Endothelial cell of umbilical vein (primary cell): ENCODE measurements at regions of chrX and their contacts with region 1.

Region 1: DNA sequence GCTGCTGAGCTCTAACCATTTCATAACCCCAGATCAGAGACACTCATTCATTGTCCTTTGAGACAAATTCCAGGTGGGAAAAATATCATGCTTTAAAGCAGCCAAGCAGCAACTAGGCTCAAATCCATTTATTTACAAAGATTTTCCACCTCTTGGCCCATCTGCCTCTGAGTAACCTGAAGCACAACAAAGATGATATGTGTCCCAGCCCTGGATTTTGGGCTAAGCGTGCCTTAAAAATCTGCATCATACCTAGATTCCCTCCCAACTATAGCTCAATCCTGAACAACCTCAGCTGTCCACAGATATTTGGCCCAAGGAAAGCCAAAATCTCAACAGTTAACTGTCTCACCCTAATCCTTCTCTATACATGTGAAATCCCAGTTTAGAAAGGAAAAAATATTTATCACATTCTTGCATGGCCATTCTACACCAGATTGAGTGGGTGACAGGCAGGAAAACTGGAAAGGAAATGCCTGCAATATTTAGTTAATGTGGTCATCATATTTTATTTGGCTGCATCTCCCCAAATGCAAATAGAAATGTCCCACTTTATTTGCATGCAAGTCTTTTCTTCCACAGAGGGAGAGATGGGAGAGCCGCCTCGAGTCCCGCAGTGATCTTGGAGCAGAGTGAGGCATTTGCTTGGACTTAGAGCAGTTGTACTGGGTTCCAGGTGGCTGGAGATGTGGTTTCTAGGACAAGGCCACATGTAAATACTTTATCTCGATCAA is 146.4 kb upstream of the EOLA2 start:
- DNase-seq: peak; percentile 81
- H3K4me3 ChIP-seq: no peak overlapping the region
- H3K27ac ChIP-seq: peak overlapping the region; percentile 90
- H3K4me1 ChIP-seq: peaks cover 27% of the 10 kb centered on the region
- H3K27me3 ChIP-seq: no peaks in the 10 kb centered on the region
- CTCF ChIP-seq: no peak
- POLR2A ChIP-seq: no peak

Region 2: DNA sequence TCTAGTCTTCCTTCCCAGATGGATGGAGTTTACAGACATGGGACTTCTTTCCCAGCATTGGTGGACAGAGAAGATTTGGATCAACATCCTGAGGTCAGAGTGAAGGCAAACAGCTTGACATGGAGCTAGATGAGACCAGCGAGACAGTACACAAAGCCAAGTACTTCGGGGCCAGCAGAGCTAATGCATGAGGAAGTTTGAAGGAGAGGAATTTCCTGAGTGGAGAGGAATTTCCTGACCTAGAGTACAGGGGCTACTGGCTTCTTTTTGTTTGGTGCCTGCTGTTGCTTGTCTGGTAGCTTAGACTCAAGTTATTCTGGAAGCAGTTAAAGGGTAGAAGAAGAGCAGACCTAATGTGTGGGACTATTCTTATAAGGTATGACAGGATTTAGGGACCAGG is 77.3 kb before region 1 on chrX:
- CTCF ChIA-PET with region 1: no interaction called
- POLR2A ChIA-PET with region 1: no interaction called
- dilution Hi-C with region 1: no loop called
- intact Hi-C with region 1: loop called (anchors 1 kb)
- DNase-seq: peak; percentile 43
- H3K4me3 ChIP-seq: no peak overlapping the region
- H3K27ac ChIP-seq: peak overlapping the region; percentile 31
- H3K4me1 ChIP-seq: peaks cover 15% of the 10 kb centered on the region
- H3K27me3 ChIP-seq: no peaks in the 10 kb centered on the region
- CTCF ChIP-seq: no peak
- POLR2A ChIP-seq: no peak

Region 3: DNA sequence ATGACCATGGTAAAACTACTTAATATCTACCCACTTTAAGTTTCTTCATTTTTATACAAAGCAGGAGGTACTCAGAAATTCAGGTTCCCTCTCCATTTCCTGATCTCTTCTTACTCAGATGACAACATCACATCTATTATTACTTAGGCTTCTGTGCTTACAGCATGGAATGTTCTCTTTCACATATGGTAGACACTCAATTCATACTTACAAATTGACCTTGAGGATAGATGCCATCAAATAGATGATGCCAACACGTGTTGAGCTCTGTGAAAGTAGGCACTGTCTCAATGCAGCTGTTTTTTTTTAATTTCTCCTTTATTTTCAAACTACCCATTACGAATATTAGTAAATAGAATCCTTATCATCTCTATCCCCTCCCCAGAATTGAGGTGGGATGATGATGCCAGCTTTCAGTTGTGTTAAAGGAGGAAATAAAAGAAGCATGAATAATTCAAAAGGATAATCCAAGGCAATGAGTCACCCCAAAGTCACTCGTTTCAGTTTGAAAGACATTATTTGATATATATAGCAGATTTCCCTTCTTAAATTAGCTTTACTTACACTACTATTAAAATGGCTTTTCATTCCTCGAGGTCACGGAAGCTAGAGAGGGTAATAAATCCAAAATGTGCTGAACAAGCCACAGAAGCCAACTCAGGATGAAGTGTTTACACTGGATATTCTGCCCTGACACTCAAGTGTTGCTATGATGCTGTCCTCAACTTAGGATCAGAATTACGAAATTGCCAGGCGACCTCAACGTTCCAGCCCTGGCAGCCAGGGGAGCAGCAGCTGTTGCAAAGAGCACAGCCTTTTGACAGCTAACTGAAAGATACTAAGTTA is 22.1 kb before region 1 on chrX:
- CTCF ChIA-PET with region 1: interaction called, 6 read pairs
- POLR2A ChIA-PET with region 1: no interaction called
- dilution Hi-C with region 1: no loop called
- intact Hi-C with region 1: loop called (anchors 1 kb)
- DNase-seq: peak; percentile 68
- H3K4me3 ChIP-seq: no peak overlapping the region
- H3K27ac ChIP-seq: peak overlapping the region; percentile 76
- H3K4me1 ChIP-seq: peaks cover 31% of the 10 kb centered on the region
- H3K27me3 ChIP-seq: no peaks in the 10 kb centered on the region
- CTCF ChIP-seq: no peak
- POLR2A ChIP-seq: no peak

Region 4: DNA sequence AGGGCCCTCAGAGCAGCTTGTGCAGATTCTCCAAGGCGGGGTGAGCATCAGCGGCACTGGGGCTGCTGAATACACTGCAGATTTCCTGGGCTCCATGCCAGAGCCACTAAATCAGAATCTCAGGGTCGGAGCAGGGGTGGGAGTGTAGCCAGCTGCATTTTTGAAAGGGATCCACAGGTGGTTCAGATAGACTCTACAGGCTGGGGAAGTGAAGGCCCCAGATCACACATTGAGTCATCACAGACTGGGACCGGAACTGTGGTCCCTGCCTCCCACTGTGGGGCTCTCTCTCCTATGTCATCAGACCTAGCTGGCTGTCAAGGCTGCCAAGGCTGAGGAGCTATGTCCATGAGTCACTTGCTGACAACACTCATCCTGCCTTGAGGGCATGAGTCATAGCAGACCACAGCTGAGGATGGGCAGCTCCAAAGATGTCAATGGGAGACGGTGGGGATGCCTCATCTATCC is 116.2 kb after region 1 on chrX:
- CTCF ChIA-PET with region 1: no interaction called
- POLR2A ChIA-PET with region 1: no interaction called
- dilution Hi-C with region 1: no loop called
- intact Hi-C with region 1: loop called (anchors 2 kb)
- DNase-seq: peak; percentile 73
- H3K4me3 ChIP-seq: no peak overlapping the region
- H3K27ac ChIP-seq: no peak overlapping the region
- H3K4me1 ChIP-seq: peaks cover 11% of the 10 kb centered on the region
- H3K27me3 ChIP-seq: no peaks in the 10 kb centered on the region
- CTCF ChIP-seq: no peak
- POLR2A ChIP-seq: no peak

Region 5: DNA sequence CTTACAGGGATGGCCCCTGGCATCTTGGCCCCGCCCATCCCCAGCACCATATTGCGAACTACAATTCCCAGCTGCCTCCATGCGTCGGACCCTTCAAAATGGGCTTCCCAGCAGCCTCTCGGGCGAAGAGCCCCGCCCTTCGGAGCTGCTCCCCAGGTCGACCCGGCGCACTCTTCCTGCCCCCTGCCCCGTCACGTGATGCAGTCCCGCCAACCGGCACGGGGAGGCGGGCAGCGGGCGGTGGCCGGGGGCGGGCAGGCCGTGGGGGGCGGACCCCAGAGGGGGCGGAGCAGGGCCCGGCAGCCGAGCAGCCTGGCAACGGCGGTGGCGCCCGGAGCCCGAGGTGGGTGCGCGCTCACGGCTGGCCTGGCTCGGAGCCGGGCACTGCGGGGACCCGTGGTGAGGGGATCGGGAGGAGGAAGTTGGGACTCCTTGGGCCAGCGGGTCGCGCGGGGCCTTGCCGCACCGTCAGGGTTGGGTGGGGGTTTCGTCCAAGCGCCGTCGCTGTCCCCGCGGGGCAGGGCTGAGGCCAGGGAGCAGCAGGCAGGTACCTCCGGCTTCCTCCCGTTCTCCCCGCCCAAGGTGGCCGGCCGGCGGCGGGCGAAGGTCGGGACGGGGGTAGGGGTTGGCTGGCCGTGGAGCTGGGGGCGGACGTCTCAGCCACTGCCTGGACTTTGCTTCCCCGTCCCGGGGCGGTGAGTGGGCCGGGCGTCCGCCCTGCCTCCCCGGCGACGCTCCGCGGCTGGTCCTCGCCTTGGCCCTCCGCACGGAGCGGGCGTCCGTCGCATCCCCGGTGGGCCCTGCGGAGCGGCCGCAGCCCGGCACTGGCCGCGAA is 483.9 kb after region 1 on chrX and contains the start of gene MTM1:
- CTCF ChIA-PET with region 1: no interaction called
- POLR2A ChIA-PET with region 1: no interaction called
- dilution Hi-C with region 1: no loop called
- intact Hi-C with region 1: loop called (anchors 1 kb)
- DNase-seq: peak; percentile 95
- H3K4me3 ChIP-seq: peak within 1 kb of the TSS; percentile 54 to 92 (median 75)
- H3K27ac ChIP-seq: peak within 1 kb of the TSS; percentile 21
- H3K4me1 ChIP-seq: peaks cover 11% of the 10 kb centered on the region
- H3K27me3 ChIP-seq: no peaks in the 10 kb centered on the region
- CTCF ChIP-seq: no peak
- POLR2A ChIP-seq: no peak
- total RNA-seq, gene MTM1: 10.1 and 13.2 TPM in 2 replicates